Ascending aorta (tissue), 2 donors: ENCODE measurements at regions of chr12 and their contacts with region 1.

Region 1: DNA sequence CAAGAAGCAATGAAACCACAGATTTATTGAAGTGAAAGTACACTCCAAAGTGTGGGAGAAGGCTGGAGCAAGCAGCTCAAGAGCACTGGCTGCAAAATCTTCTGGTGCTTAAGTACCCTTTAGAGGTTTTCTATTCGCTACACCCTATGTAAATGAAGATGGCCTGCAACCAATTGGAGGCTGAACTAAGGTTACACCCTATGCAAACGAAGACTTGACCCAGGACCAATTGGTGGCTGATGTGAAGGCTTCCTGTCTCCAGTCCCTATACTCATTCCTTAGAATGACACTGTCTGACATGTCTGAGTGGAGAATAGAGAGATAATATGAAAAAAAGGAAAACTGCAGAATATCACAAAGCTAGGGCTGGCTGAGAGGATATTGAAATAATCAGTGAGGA is 57.2 kb downstream of the ALG10B start:
- DNase-seq: no peak
- H3K4me3 ChIP-seq: no peak overlapping the region
- H3K27ac ChIP-seq: no peak overlapping the region
- H3K4me1 ChIP-seq: no peaks in the 10 kb centered on the region
- H3K27me3 ChIP-seq: no peaks in the 10 kb centered on the region
- CTCF ChIP-seq: no peak

Region 2: DNA sequence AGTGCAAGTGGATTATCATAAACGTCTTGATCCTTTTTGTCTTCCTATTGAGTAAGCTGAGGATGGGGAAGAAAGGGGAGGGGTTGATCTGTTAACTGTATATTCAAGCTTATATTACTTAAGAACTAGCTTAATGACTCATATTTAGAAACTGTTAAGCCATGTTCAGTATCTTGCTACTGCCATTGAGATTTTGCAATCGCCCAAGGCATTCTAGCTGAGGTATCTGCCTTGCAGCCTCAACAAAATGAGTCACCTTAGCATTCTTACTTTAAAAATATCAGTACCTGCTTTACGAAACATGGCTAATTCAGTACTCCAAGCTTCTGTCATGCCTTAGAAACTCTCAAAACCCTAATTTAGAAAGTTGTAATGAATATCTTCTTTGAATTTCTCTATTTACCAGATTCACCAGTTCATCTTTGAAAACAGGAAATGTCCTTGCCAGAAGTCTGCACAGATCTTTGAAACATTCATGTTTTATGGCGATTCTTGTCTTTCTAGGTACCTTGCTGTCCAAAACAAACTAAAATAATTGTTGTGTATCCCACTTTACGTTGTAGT is 18.9 kb after region 1 on chr12:
- intact Hi-C with region 1: no loop called
- DNase-seq: no peak
- H3K4me3 ChIP-seq: no peak overlapping the region
- H3K27ac ChIP-seq: no peak overlapping the region
- H3K4me1 ChIP-seq: no peaks in the 10 kb centered on the region
- H3K27me3 ChIP-seq: no peaks in the 10 kb centered on the region
- CTCF ChIP-seq: no peak

Region 3: GRCh38 chr12:39483042-39483441 is 1109.3 kb after region 1 on chr12:
- intact Hi-C with region 1: loop called (anchors 10 kb)
- DNase-seq: no peak
- H3K4me3 ChIP-seq: no peak overlapping the region
- H3K27ac ChIP-seq: no peak overlapping the region
- H3K4me1 ChIP-seq: no peaks in the 10 kb centered on the region
- H3K27me3 ChIP-seq: no peaks in the 10 kb centered on the region
- CTCF ChIP-seq: no peak